Left ventricle myocardium inferior (tissue), 1 donor: ENCODE measurements at regions of chr11 and their contacts with region 1.

Region 1: DNA sequence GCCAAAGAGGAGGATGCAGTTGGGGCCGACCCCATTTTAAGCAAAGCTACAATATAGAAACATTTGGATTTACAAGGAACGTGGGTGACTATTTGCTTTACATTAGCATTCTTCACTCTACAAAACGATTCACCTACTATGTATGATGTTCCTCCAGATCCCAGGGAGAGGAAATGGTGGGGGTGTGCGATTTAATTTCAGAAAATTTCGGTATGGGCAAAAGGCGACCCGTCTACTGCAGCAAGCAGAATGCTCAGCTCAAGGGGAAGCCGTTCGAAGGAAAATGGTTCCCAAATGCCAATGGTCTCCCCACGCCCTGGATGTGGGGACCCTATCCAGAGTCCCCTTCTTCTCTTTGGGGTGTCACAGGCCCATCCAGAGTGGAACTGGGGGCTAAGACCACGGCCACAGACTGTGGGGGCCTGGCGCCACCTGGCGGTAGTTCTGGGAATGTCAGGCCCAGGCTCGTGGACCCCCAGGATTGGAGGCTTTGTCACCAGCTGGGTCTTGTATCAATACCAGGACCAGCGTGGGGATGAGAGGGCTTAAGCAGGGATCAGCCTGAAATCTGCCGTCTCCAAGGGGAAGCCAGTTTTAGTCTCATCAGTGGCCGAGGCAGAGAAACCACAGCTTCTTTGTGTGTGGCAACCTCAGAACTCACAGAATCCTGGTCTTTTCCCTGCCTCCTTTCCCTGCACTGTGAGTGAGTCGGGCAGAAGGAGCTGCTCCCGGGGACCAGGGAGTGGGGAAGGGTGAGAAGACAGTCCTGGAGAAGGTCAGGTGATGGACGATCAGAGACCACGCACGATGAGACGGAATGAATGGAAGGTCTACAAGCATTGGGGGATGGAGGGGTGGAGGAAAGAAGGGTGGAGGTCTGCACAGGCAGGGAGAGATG is 8.4 kb downstream of the LRRC10B start:
- DNase-seq: no peak
- H3K4me3 ChIP-seq: no peak overlapping the region
- H3K27ac ChIP-seq: peak overlapping the region; percentile 50
- H3K4me1 ChIP-seq: peaks cover 10% of the 10 kb centered on the region
- H3K27me3 ChIP-seq: peaks cover 18% of the 10 kb centered on the region
- CTCF ChIP-seq: peak; percentile 97

Region 2: DNA sequence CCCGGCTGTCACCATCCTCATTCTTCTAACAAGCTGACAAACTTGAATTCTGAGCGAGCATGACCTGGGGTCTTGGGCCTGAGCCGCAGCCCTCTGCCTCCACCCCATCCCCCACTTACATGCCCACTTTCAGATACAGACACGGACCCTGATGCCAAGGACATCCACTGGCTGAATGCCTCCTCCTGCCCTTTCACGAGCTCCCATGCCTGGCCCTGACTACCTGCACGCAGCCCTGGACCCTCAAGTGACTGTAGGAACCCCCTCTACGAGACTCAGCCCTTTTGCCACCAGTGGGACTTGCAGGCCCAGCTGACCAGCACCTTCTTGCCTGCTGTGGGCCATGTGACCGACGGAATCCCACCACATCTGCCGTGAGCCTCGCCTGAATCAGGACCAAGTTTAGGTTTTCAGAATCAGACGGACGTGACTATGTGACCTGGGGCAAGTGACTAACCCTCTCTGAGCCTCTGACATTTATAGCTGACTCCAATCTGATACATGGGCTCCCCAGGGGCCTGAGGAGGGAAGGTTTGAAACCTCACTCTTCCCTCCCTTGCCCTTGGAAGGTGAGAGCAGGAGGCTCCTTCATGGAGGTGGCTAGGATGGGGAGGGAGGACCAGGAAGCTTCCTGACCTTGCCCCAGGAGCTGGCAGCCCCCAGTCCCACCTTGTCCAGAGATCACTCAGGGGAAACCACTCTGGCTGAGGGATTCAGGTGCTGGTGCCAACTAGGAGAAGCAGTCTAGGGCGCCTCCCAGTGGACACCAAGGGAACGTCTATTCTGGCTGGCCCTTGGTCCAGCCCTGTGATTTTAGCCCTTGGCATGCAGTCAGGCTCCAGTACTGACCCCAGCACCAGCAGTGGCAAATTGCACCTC is 110.9 kb after region 1 on chr11:
- intact Hi-C with region 1: loop called (anchors 5 kb)
- DNase-seq: peak; percentile 60
- H3K4me3 ChIP-seq: no peak overlapping the region
- H3K27ac ChIP-seq: peak overlapping the region; percentile 87
- H3K4me1 ChIP-seq: peaks cover 27% of the 10 kb centered on the region
- H3K27me3 ChIP-seq: no peaks in the 10 kb centered on the region
- CTCF ChIP-seq: peak; percentile 89